AG04449 (cell line): ENCODE measurements at regions of chr4 and their contacts with region 1.

Region 1: GRCh38 chr4:5399790-5400421 is 308.5 kb downstream of the EVC2 start:
- DNase-seq: no peak
- H3K4me3 ChIP-seq: no peak overlapping the region
- CTCF ChIP-seq: peak; percentile 71

Region 2: DNA sequence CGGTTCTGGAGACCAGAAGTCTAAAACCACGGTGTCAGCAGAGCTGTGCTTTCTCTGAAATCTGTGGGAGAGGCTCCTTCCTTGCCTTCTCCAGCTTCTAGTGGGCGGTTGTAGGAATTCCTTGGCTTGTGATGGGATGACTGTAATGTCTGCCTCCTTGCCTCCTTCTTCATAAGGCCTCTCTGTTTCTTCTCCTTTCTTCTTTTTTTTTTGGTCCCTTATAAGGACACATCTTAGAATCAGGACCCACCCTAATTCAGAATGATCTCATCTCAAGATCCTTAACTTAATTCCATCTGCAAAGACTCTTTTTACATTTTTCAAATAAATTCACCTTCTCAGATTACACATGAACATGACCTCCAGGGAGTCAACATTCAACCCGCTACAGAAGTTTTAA is 161.7 kb before region 1 on chr4:
- CTCF ChIA-PET with region 1: no interaction called
- POLR2A ChIA-PET with region 1: no interaction called
- DNase-seq: peak; percentile 38
- H3K4me3 ChIP-seq: no peak overlapping the region
- CTCF ChIP-seq: no peak

Region 3: DNA sequence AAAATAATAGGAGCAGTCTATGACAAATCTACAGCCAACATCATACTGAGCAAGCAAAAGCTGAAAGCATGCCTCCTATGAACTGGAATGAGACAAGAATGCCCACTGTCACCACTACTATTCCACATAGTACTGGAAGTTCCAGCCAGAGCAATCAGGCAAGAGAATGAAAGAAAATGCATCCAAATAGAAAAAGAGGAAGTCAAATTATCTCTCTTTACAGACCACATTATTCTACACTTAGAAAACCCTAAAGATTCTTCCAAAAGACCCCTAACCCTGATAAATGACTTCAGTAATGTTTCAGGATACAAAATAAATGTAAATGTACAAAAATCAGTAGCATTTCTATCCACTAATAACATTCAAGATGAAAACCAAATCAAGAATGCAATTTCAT is 99.6 kb before region 1 on chr4:
- CTCF ChIA-PET with region 1: no interaction called
- POLR2A ChIA-PET with region 1: no interaction called
- DNase-seq: no peak
- H3K4me3 ChIP-seq: no peak overlapping the region
- CTCF ChIP-seq: no peak

Region 4: DNA sequence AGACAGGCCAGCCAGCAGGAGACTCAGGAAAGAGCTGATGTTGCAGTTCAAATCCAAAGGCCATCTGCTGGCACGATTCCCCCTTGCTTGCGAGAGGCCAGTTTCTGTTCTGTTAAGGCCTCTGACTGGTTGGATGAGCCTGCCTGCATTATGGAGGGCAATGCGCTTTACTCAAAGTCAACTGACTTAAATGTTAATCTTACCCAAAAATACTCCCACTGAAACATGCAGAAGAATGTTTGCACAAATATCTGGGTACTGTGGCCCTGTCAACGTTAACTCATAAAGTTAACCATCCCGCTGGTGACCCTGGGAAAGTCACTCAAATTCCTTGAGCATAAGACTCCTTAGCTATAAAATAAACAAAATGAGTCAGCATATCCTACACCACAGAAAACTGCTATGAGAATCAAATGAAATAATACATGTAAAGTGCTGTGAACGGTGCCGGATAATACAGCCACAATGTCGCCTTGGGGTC is 17.9 kb before region 1 on chr4:
- CTCF ChIA-PET with region 1: interaction called, 14 read pairs
- POLR2A ChIA-PET with region 1: no interaction called
- DNase-seq: peak; percentile 63
- H3K4me3 ChIP-seq: no peak overlapping the region
- CTCF ChIP-seq: no peak

Region 5: GRCh38 chr4:5389756-5390310 is 10.1 kb before region 1 on chr4:
- CTCF ChIA-PET with region 1: interaction called, 14 read pairs
- POLR2A ChIA-PET with region 1: no interaction called
- DNase-seq: no peak
- H3K4me3 ChIP-seq: no peak overlapping the region
- CTCF ChIP-seq: no peak

Region 6: GRCh38 chr4:5409972-5410618 is 10.2 kb after region 1 on chr4:
- CTCF ChIA-PET with region 1: interaction called, 23 read pairs
- POLR2A ChIA-PET with region 1: no interaction called
- DNase-seq: no peak
- H3K4me3 ChIP-seq: no peak overlapping the region
- CTCF ChIP-seq: peak; percentile 13

Region 7: DNA sequence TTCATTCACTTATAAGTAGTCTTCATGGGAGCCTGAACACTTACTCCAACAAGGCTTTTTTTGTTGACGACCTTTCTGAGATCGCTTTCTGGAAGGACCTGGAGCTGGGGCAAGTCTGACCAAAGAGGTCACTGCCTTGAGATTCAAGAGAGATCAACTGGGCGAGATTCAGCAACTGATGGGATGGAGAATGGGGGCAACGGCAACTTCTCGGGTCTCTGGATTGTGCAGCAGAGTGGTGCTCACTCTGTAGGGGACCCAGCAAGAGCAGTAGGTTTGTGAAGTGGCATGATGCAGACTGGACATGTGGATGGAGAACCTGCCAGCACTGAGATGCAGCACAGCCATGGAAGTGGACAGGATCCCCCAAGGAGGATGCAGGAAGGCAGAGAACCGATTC is 20.4 kb after region 1 on chr4:
- CTCF ChIA-PET with region 1: no interaction called
- POLR2A ChIA-PET with region 1: no interaction called
- DNase-seq: no peak
- H3K4me3 ChIP-seq: no peak overlapping the region
- CTCF ChIP-seq: no peak

Region 8: DNA sequence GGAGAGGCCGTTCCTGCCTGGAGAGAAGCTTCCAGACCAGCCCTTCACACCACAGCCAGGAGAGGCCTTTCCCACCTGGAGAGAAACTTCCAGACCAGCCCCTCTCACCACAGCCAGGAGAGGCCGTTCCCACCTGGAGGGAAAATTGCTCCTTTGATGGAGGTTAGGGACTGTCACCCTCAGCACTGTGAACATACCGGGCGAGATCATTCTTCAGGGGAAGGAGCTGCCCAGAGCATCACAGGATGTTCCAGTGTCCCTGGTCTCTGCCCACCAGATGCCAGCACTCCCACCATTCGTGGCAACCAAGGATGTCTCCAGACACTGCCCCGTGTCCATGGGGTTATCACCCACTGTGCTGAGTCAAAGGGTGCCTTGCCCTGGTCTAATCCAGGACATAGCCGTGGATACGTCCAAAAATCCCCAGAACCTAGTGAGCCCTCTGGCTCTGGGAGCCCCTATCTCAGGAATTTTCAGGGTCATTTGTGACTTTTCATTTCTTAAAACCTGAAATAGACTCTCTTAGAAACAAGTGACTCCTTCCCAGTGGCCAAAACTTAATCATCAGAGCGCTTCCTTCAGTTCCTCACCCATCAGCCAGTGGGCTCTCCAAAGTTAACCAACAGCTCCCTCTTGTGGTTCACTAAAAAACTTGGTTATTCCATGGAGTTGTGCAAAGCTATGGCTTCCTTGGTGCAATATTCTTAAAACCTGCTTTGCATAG is 412.8 kb after region 1 on chr4:
- CTCF ChIA-PET with region 1: interaction called, 15 read pairs
- POLR2A ChIA-PET with region 1: no interaction called
- DNase-seq: peak; percentile 24
- H3K4me3 ChIP-seq: no peak overlapping the region
- CTCF ChIP-seq: peak; percentile 62